ENCODE measurements at regions of chr9 and their contacts with region 1.

Region 1: DNA sequence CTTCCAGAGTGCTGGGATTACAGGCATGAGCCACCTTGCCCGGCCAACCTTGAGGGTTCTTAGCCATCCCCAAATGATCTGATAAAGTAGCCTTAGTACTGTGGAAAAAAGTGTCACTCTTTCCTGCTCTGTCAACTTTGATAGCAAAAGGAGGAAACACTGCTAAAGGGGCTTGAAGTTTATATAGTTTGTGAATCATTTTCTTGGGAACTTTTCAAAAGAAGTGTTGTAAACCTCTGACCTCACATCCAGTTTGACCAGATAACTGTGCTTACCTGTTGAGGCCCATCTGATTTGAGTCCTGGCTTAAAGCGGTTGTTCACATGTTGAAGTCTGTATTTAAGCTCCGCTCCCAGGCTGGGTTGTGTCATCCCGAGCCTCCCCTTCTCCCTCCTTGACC is 303.3 kb downstream of the DOCK8 start:
- DNase-seq: no peak
- H3K4me3 Mint-ChIP-seq: peak overlapping the region; percentile 68
- H3K27ac Mint-ChIP-seq: peak overlapping the region; percentile 90
- H3K4me1 Mint-ChIP-seq: peaks cover 72% of the 10 kb centered on the region
- H3K27me3 Mint-ChIP-seq: no peaks in the 10 kb centered on the region

Region 2: GRCh38 chr9:447230-448025 is 70.6 kb before region 1 on chr9:
- CTCF ChIA-PET with region 1: no interaction called
- POLR2A ChIA-PET with region 1: no interaction called
- intact Hi-C with region 1: loop called (anchors 2 kb)
- DNase-seq: peak; percentile 83
- H3K4me3 Mint-ChIP-seq: no peak overlapping the region
- H3K27ac Mint-ChIP-seq: peak overlapping the region; percentile 78
- H3K4me1 Mint-ChIP-seq: peaks cover 27% of the 10 kb centered on the region
- H3K27me3 Mint-ChIP-seq: no peaks in the 10 kb centered on the region

Region 3: GRCh38 chr9:757246-757881 is 239.4 kb after region 1 on chr9:
- CTCF ChIA-PET with region 1: no interaction called
- POLR2A ChIA-PET with region 1: no interaction called
- intact Hi-C with region 1: loop called (anchors 10 kb)
- DNase-seq: peak; percentile 14
- H3K4me3 Mint-ChIP-seq: no peak overlapping the region
- H3K27ac Mint-ChIP-seq: no peak overlapping the region
- H3K4me1 Mint-ChIP-seq: peaks cover 9% of the 10 kb centered on the region
- H3K27me3 Mint-ChIP-seq: peaks cover 9% of the 10 kb centered on the region

Region 4: GRCh38 chr9:2014696-2015580 is 1496.9 kb after region 1 on chr9 and contains the start of gene SMARCA2:
- CTCF ChIA-PET with region 1: no interaction called
- POLR2A ChIA-PET with region 1: no interaction called
- intact Hi-C with region 1: loop called (anchors 10 kb)
- DNase-seq: peak; percentile 98
- H3K4me3 Mint-ChIP-seq: peak within 1 kb of the TSS; percentile 99
- H3K27ac Mint-ChIP-seq: peak within 1 kb of the TSS; percentile 100
- H3K4me1 Mint-ChIP-seq: peaks cover 47% of the 10 kb centered on the region
- H3K27me3 Mint-ChIP-seq: peaks cover 4% of the 10 kb centered on the region
- total RNA-seq, gene SMARCA2: 95.1 to 100 TPM

Measured in activated CD4-positive, alpha-beta memory T cell treated with anti-CD3 and anti-CD28 coated beads for 36 hours (primary cell).